Right cardiac atrium (tissue), 5 donors: ENCODE measurements at regions of chr5 and their contacts with region 1.

Region 1: DNA sequence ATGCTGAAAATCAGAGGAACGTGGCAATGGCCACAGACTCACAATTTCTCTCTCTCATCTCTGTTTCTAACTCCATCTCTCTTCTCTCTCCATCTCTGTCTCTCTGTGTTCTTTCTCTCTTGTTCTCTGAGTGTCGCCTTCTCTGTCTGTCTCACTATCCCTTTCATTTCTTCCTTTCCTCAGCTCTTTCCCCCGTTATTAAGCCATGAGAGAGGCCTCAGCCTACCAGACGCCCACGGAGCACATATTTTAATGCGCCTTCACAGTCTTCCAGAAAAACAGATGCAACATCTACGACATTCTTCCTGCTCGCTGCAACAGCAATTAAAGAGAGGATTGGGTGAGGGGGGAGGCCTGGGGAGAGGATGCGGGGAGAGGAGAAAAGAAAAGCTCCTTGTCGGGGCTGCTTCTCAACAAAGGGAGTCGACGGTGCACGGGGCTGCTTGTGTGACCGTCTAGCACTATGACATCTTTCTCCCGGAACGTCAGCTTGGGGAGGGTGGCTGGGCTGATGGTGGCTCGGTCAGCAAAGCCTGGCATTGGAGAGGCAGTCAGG is 37.7 kb upstream of the NEURL1B start:
- DNase-seq: peak; percentile 29 to 68 (median 67)
- ATAC-seq: peak in 1 of 2 donors; percentile 6
- H3K4me3 ChIP-seq: no peak overlapping the region
- H3K27ac ChIP-seq: peak overlapping the region; percentile 74
- H3K4me1 ChIP-seq: peaks cover 11% of the 10 kb centered on the region
- H3K27me3 ChIP-seq: no peaks in the 10 kb centered on the region

Region 2: GRCh38 chr5:171939951-171940350 is 663.4 kb before region 1 on chr5:
- intact Hi-C with region 1: no loop called
- DNase-seq: no peak
- ATAC-seq: no peak
- H3K4me3 ChIP-seq: no peak overlapping the region
- H3K27ac ChIP-seq: no peak overlapping the region
- H3K4me1 ChIP-seq: peaks cover 3% of the 10 kb centered on the region
- H3K27me3 ChIP-seq: no peaks in the 10 kb centered on the region

Region 3: DNA sequence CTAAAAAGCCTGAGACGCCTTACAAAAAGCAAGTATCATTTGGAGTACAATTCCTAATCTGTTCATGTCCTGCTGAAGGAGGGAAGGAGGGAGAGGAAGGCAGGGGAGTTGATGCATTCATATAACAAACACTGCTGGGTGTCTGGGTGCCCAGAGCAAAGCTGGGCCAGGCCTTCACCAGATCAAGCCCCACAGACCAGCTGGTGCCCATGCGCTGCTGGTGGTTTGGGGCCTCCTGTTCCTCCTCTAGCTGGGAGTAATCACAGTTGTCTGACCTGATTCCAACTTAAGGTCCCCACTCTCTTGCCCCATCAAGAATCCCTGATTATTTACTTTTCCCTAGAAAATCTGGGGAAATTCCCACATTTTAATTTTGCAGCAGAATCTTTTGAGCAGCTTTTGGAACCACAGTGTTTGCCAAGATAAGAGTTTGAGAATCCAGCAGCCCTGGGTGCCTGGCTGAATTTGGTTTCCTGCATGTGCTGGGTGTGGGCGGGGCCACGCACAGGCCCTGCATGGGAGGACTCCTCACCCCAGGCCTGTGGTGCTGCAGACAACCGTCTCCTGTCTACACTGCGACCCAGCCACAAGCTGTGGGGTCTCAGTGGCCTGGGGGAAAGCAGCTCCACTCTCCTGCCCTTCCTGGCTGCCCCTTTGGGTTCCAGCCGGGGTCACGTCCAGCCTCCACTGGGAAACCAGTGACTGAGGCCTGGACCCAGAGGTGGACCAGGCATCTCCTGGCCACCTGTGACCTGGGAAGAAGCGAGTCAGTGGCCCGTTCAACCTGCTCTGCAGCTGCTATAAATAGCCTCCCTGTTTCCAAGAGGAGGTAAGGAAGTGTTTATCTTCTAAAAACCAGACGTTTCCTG is 85.3 kb after region 1 on chr5:
- intact Hi-C with region 1: loop called in 1 of 4 experiments (anchors 10 kb)
- DNase-seq: peak in 2 of 3 donors; percentile 80 to 86
- ATAC-seq: peak; percentile 66 to 72
- H3K4me3 ChIP-seq: no peak overlapping the region
- H3K27ac ChIP-seq: peak overlapping the region; percentile 19
- H3K4me1 ChIP-seq: peaks cover 17% of the 10 kb centered on the region
- H3K27me3 ChIP-seq: no peaks in the 10 kb centered on the region